ENCODE measurements at regions of chr5 and their contacts with region 1.

Region 1: GRCh38 chr5:59810041-59810440 is 83.5 kb downstream of the PDE4D start:
- DNase-seq: peak; percentile 61
- H3K4me3 Mint-ChIP-seq: peak overlapping the region; percentile 58
- H3K27ac Mint-ChIP-seq: no peak overlapping the region
- H3K4me1 Mint-ChIP-seq: no peaks in the 10 kb centered on the region
- H3K27me3 Mint-ChIP-seq: peaks cover 25% of the 10 kb centered on the region
- CTCF ChIP-seq: peak; percentile 90

Region 2: DNA sequence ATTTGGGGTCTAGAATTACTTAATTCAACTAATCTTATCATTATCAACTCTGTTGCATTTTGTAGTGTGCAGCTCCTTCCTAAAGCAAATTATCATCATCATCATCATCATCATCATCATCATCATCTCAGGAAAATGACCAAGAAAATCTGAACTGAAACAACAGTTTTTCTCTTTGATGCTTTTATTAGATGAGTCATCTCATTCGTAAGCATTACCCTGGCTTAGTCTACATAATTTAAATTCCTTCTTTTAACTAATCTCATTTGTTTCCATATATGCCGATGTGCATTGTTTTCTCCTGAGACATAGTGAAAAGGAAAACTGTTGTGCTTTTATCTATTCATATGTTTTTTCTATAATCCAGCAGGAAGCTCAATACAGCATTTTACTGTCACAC is 256.5 kb after region 1 on chr5:
- CTCF ChIA-PET with region 1: no interaction called
- intact Hi-C with region 1: loop called (anchors 5 kb)
- DNase-seq: no peak
- H3K4me3 Mint-ChIP-seq: no peak overlapping the region
- H3K27ac Mint-ChIP-seq: no peak overlapping the region
- H3K4me1 Mint-ChIP-seq: peaks cover 8% of the 10 kb centered on the region
- H3K27me3 Mint-ChIP-seq: no peaks in the 10 kb centered on the region
- CTCF ChIP-seq: no peak

Region 3: GRCh38 chr5:60287174-60287771 is 477.2 kb after region 1 on chr5:
- CTCF ChIA-PET with region 1: interaction called, 6 read pairs
- intact Hi-C with region 1: loop called (anchors 1 kb)
- DNase-seq: peak; percentile 64
- H3K4me3 Mint-ChIP-seq: no peak overlapping the region
- H3K27ac Mint-ChIP-seq: no peak overlapping the region
- H3K4me1 Mint-ChIP-seq: no peaks in the 10 kb centered on the region
- H3K27me3 Mint-ChIP-seq: peaks cover 30% of the 10 kb centered on the region
- CTCF ChIP-seq: peak; percentile 70

Region 4: DNA sequence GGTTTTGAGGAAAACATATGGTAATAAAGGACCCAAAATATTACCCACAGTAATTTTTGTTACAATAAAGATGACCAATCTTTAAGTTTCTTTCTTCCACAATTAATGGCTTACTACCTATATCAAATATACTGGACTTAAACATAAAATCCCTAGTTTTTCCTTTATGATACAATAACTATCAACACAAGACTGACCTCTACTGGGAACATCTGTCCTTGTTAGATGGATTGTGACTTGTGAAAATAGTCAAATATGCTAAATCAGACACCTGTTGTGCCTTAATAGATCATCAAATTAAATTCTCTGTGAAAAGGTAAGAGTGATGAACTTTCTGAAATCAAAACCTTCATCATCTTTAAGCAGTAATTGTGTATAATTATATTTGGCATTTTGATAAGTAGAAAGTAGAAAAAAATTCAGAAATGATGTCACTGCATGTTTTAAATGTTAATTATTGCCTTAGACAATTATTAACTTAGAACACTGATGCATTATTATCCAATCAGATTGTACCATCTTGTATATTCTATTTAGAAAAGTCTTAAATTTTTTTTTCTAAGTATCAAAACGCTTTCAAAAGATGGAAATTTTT is 776.4 kb after region 1 on chr5:
- CTCF ChIA-PET with region 1: no interaction called
- intact Hi-C with region 1: loop called (anchors 5 kb)
- DNase-seq: no peak
- H3K4me3 Mint-ChIP-seq: no peak overlapping the region
- H3K27ac Mint-ChIP-seq: no peak overlapping the region
- H3K4me1 Mint-ChIP-seq: no peaks in the 10 kb centered on the region
- H3K27me3 Mint-ChIP-seq: no peaks in the 10 kb centered on the region
- CTCF ChIP-seq: no peak

Measured in Calu3 (cell line).